RWPE1 (cell line): ENCODE measurements at regions of chr20 and their contacts with region 1.

Region 1: GRCh38 chr20:52312132-52312729 is 120.7 kb upstream of the ZFP64 start:
- DNase-seq: peak; percentile 82
- H3K27ac ChIP-seq: no peak overlapping the region
- CTCF ChIP-seq: peak; percentile 98

Region 2: GRCh38 chr20:52294106-52294628 is 18.1 kb before region 1 on chr20:
- CTCF ChIA-PET with region 1: interaction called, 13 read pairs
- POLR2A ChIA-PET with region 1: no interaction called
- DNase-seq: no peak
- H3K27ac ChIP-seq: no peak overlapping the region
- CTCF ChIP-seq: no peak

Region 3: GRCh38 chr20:52332230-52332629 is 20.0 kb after region 1 on chr20:
- CTCF ChIA-PET with region 1: interaction called, 13 read pairs
- POLR2A ChIA-PET with region 1: no interaction called
- DNase-seq: no peak
- H3K27ac ChIP-seq: no peak overlapping the region
- CTCF ChIP-seq: no peak

Region 4: GRCh38 chr20:52389606-52390005 is 77.4 kb after region 1 on chr20:
- CTCF ChIA-PET with region 1: no interaction called
- POLR2A ChIA-PET with region 1: no interaction called
- DNase-seq: no peak
- H3K27ac ChIP-seq: no peak overlapping the region
- CTCF ChIP-seq: no peak

Region 5: DNA sequence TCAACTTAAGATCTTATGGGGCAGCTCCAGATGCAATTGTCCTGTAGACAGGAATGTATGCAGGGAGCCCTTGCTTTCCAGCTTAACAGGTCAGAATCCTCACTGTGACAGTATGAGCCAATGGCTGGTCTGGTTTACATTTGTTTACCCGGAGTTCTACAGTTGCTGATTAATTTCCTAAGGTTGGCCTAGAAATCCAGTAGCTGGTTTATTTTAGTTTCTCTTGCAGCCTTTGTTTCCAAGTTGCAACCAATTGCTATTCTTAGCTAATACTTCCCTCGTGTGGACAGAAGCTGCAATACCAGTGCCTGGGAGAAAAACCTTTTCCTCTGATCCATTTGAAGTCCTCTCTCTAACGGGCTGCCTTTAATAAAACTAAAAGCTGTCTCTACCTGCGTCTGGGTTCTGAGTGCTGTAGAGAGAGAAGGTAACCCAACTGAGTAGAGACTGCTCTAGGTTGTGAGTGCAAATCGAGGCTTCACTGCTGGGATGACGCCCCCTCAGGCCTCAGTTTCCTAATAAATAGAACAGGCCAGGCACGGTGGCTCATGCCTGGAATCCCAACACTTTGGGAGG is 1235.5 kb after region 1 on chr20:
- CTCF ChIA-PET with region 1: interaction called, 25 read pairs
- POLR2A ChIA-PET with region 1: no interaction called
- DNase-seq: peak; percentile 92
- H3K27ac ChIP-seq: no peak overlapping the region
- CTCF ChIP-seq: peak; percentile 96